Colonic mucosa (tissue), 4 donors: ENCODE measurements at regions of chr14 and their contacts with region 1.

Region 1: GRCh38 chr14:75489480-75489837 is 32.8 kb upstream of the BATF start:
- DNase-seq: no peak
- H3K4me3 ChIP-seq: no peak overlapping the region
- H3K27ac ChIP-seq: no peak overlapping the region
- H3K4me1 ChIP-seq: no peaks in the 10 kb centered on the region
- H3K27me3 ChIP-seq: no peaks in the 10 kb centered on the region
- CTCF ChIP-seq: no peak

Region 2: DNA sequence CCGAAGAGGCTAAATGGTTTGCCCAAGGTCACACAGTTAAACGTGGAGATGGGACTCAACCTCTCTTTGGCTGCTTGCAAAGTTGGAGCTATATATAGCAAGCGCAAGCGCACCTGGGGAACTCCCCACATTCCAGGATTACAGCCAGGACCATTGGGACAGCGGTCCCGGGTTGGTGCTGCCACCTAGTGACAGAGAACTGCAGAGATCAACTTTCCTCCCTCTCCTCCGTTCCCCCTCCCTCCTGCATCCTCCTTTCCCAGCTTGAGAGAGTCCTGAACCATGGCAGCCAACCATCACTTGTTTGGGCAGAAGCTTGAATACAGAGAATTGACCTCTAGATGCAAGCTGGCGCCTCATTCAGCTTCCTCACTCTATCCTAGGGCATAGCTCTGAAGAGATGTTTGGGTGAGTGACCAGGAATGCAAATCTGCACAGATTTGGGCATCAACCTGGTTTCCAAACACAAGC is 71.5 kb after region 1 on chr14:
- intact Hi-C with region 1: loop called (anchors 2 kb)
- DNase-seq: peak; percentile 81
- H3K4me3 ChIP-seq: no peak overlapping the region
- H3K27ac ChIP-seq: no peak overlapping the region
- H3K4me1 ChIP-seq: no peaks in the 10 kb centered on the region
- H3K27me3 ChIP-seq: no peaks in the 10 kb centered on the region
- CTCF ChIP-seq: peak; percentile 81